Aorta (tissue), 5 donors: ENCODE measurements at regions of chr2 and their contacts with region 1.

Region 1: DNA sequence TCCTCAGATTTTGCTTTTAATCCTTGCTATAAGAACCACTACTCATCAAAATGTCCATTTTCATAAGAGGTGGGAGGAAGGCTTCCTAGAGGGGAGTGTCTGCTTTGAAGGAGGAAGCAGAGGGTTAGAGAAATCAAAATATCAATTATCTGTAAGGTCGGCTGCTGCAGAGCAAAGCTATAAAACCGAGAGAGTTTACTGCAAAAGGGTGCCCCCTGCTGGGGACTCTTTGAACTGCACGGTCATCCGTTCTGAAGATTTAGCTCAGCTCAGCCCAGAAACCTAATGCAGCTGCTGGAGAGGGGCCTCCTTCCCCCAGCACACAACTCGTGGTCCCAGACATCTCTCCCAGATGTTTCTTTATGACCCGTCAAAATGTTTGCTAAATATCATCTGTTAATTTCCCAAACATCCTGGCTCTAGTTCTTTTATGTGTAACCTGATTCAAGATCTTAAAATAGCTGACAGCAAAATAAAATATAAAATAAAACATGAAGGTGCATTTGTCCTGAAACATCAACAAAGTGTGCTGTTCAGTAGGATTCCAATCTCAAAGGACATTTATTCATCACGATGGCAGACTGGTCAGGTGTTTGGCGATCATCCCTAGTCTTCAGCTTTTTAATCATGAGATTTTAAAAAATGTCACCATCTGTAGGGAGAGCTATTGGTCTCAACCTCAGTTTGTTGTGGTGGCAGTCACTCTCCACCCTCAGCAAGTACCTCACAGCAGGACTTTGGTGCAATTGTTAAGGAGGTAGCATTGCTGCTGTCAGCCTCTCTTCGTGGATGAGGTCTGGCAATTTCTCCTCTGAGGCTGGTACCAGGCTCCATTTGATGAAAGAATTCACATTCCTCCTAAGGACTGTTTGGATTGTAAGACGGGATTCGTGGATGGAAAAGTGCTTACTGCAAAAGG is 185.9 kb downstream of the MTX2 start:
- DNase-seq: peak; percentile 85 to 95
- ATAC-seq: peak; percentile 91
- H3K4me3 ChIP-seq: no peak overlapping the region
- H3K27ac ChIP-seq: no peak overlapping the region
- H3K4me1 ChIP-seq: no peaks in the 10 kb centered on the region
- H3K27me3 ChIP-seq: no peaks in the 10 kb centered on the region

Region 2: GRCh38 chr2:176269319-176270099 is 185.6 kb before region 1 on chr2 and contains the start of gene MTX2:
- intact Hi-C with region 1: loop called (anchors 5 to 10 kb)
- DNase-seq: peak; percentile 77 to 90
- ATAC-seq: peak; percentile 97
- H3K4me3 ChIP-seq: peak within 1 kb of the TSS; percentile 44 to 88
- H3K27ac ChIP-seq: peak within 1 kb of the TSS in 1 of 2 donors; percentile 4
- H3K4me1 ChIP-seq: peaks cover 0 to 2% of the 10 kb centered on the region in 2 donors
- H3K27me3 ChIP-seq: peaks cover 0 to 2% of the 10 kb centered on the region in 2 donors
- total RNA-seq, gene MTX2: 18.0 to 18.5 TPM

Region 3: DNA sequence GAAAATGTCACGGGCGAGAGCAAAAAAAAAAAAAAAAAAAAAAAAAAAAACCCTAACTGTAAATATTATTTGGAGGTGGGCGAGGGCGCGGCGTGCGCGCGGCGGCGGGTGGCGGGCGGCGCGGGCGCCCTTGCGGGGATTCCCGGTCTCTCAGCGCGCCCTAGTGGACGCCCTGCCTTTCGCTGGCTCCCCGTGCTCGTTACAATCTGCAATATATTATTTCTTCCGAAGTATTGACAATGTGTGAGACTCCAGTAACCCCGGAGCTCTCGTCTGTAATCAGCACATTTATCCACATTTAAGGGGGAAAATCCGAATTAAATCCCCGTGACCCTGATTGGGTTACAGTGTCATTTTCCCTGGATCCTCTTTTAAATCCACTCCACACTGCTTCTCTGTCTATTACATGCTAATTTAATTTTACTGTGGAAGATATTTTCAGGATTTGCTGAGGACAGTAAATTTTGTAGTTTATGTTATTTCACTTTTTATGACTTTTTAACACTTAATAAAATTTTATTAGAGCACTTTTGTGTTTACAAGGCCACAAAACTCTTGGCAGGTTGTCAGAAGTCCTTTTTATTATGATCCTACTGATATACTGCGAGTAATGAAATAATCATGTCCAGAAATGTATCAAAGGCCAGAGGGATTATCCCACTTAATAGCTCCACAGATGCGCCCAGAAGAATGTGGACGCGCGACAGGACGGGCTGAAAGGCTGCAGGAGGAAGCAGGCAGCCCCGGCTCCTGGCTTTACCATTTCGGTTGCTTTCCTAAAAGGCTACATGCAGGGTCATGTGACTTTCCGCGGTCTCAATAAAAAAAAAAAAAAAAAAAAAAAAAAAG is 183.2 kb after region 1 on chr2:
- intact Hi-C with region 1: loop called (anchors 5 kb)
- DNase-seq: peak; percentile 77 to 94
- ATAC-seq: peak; percentile 94
- H3K4me3 ChIP-seq: peak overlapping the region; percentile 80 to 81
- H3K27ac ChIP-seq: no peak overlapping the region
- H3K4me1 ChIP-seq: no peaks in the 10 kb centered on the region
- H3K27me3 ChIP-seq: no peaks in the 10 kb centered on the region